Transverse colon (tissue), 4 donors: ENCODE measurements at regions of chr3 and their contacts with region 1.

Region 1: DNA sequence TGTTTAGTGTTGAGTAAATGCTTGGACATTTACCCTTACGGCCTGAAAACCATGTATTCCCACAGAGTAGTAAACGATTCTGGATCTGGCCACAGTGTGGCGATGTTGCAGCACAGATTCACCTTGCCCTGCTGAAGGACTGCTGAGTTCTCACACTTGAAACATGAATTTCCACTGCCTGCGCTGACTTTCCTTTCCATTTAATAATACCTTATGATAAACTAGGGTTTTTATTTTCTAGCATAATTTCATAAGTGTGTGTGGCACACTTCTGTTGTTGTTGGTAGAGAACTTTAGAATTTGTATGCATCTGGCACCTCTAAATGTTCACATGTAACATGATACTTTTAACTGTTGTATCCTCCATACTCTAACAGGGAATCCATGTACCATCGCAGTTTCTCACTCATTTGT is 53.9 kb downstream of the C3orf38 start:
- DNase-seq: peak; percentile 65
- H3K4me3 ChIP-seq: no peak overlapping the region
- H3K27ac ChIP-seq: no peak overlapping the region
- H3K4me1 ChIP-seq: no peaks in the 10 kb centered on the region
- H3K27me3 ChIP-seq: no peaks in the 10 kb centered on the region
- CTCF ChIP-seq: peak; percentile 66 to 82 (median 81)
- EP300 ChIP-seq: no peak
- POLR2A ChIP-seq: no peak

Region 2: DNA sequence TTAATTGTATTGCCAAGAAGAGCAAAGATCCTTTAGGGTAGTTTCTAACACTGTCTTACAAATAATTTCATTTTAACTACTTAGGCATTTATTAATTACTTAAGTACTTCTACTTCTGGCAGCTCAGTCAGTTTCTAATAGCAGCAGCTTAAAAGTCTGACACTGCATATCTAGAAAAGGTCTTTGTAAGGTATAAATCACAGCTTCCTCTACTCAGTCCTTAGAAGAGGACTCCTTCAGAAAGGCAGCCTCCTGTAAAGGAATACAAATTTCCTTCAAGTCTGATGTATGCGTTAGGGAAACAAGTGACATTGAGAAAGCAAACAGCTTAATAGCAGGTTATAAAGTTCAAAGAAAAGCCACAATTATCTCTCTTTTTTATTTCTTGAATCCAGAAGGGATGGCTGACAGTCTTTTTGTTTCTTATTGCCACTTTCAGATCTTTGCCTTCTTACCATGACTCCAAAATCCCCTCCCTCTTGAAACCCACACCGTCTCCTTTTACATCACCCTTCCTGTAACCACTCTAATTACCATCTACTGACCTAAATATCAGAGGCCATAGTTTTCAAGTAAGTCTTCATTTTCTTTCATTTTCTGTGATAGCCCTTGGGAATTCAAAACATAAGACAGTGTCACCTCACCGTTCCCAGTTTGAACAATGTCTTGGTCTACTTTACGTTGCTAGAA is 254.3 kb before region 1 on chr3:
- in situ Hi-C with region 1: no loop called
- intact Hi-C with region 1: no loop called
- DNase-seq: no peak
- H3K4me3 ChIP-seq: no peak overlapping the region
- H3K27ac ChIP-seq: no peak overlapping the region
- H3K4me1 ChIP-seq: no peaks in the 10 kb centered on the region
- H3K27me3 ChIP-seq: no peaks in the 10 kb centered on the region
- CTCF ChIP-seq: no peak
- EP300 ChIP-seq: no peak
- POLR2A ChIP-seq: no peak

Region 3: GRCh38 chr3:87987952-87988351 is 215.7 kb before region 1 on chr3:
- in situ Hi-C with region 1: no loop called
- intact Hi-C with region 1: no loop called
- DNase-seq: no peak
- H3K4me3 ChIP-seq: no peak overlapping the region
- H3K27ac ChIP-seq: no peak overlapping the region
- H3K4me1 ChIP-seq: no peaks in the 10 kb centered on the region
- H3K27me3 ChIP-seq: no peaks in the 10 kb centered on the region
- CTCF ChIP-seq: no peak
- EP300 ChIP-seq: no peak
- POLR2A ChIP-seq: no peak

Region 4: DNA sequence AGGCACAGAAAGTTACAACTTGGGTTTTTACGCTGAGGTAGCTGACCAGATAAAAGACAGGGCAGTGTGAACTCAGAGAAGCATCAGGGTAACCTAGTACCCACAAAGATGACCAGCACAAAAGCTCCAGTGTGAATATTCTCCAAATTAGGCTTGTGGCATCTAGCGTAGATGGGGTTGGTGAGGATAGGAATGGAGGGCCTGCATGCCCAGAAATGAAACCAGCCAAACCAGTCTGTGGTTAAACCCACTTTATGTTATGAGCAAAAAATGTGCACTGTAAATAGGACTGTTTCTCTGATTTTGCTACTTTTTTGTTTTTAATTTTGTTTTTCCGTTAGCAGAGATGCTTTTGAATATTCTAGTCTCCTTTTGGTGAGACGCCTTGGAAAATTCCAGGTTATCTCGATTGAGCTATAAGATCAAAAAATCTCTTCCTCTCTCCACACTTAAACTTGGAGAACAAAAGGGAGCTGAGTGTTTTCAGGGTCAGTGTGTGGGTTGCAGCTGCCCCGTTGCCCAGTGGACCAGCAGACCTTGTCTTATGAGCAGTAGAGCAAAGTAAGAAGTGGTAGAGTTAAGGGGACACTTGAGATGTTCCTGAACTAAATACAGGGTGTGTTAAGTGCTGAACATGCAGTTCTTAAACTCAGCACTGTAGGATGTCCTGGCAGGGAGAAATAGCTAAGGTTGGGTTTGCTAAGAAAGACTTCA is 79.0 kb after region 1 on chr3:
- in situ Hi-C with region 1: no loop called
- intact Hi-C with region 1: no loop called
- DNase-seq: no peak
- H3K4me3 ChIP-seq: no peak overlapping the region
- H3K27ac ChIP-seq: no peak overlapping the region
- H3K4me1 ChIP-seq: peaks cover 0 to 5% (median 0%) of the 10 kb centered on the region in 4 donors
- H3K27me3 ChIP-seq: no peaks in the 10 kb centered on the region
- CTCF ChIP-seq: no peak
- EP300 ChIP-seq: no peak
- POLR2A ChIP-seq: no peak

Region 5: GRCh38 chr3:89098964-89099585 is 895.4 kb after region 1 on chr3:
- in situ Hi-C with region 1: loop called in 3 of 4 experiments (anchors 10 to 25 kb)
- intact Hi-C with region 1: no loop called
- DNase-seq: peak; percentile 35
- H3K4me3 ChIP-seq: no peak overlapping the region
- H3K27ac ChIP-seq: no peak overlapping the region
- H3K4me1 ChIP-seq: no peaks in the 10 kb centered on the region
- H3K27me3 ChIP-seq: no peaks in the 10 kb centered on the region
- CTCF ChIP-seq: peak; percentile 58 to 92 (median 85)
- EP300 ChIP-seq: no peak
- POLR2A ChIP-seq: no peak

Region 6: GRCh38 chr3:89107461-89108290 is 904.0 kb after region 1 on chr3 and contains the start of gene EPHA3:
- in situ Hi-C with region 1: loop called in 2 of 4 experiments (anchors 10 kb)
- intact Hi-C with region 1: no loop called
- DNase-seq: peak; percentile 52
- H3K4me3 ChIP-seq: peak within 1 kb of the TSS; percentile 9 to 40 (median 20)
- H3K27ac ChIP-seq: peak within 1 kb of the TSS in 1 of 4 donors; percentile 39
- H3K4me1 ChIP-seq: peaks cover 0 to 12% (median 6%) of the 10 kb centered on the region in 4 donors
- H3K27me3 ChIP-seq: peaks cover 53% of the 10 kb centered on the region
- CTCF ChIP-seq: no peak
- EP300 ChIP-seq: no peak
- POLR2A ChIP-seq: no peak
- total RNA-seq, gene EPHA3: 2.3 to 4.6 (median 2.4) TPM in 3 of 4 donors, not detected in the other

Region 7: GRCh38 chr3:90184861-90185260 is 1981.2 kb after region 1 on chr3:
- in situ Hi-C with region 1: loop called in 3 of 4 experiments (anchors 25 kb)
- intact Hi-C with region 1: loop called (anchors 5 kb)
- DNase-seq: no peak
- H3K4me3 ChIP-seq: no peak overlapping the region
- H3K27ac ChIP-seq: no peak overlapping the region
- H3K4me1 ChIP-seq: no peaks in the 10 kb centered on the region
- H3K27me3 ChIP-seq: no peaks in the 10 kb centered on the region
- CTCF ChIP-seq: no peak
- EP300 ChIP-seq: no peak
- POLR2A ChIP-seq: no peak